Activated CD4-positive, alpha-beta T cell treated with anti-CD3 and anti-CD28 coated beads, Interleukin-2, amount 10 ng/mL, durations not matched to agents 24 days and 14 days (primary cell): ENCODE measurements at regions of chr5 and their contacts with region 1.

Region 1: DNA sequence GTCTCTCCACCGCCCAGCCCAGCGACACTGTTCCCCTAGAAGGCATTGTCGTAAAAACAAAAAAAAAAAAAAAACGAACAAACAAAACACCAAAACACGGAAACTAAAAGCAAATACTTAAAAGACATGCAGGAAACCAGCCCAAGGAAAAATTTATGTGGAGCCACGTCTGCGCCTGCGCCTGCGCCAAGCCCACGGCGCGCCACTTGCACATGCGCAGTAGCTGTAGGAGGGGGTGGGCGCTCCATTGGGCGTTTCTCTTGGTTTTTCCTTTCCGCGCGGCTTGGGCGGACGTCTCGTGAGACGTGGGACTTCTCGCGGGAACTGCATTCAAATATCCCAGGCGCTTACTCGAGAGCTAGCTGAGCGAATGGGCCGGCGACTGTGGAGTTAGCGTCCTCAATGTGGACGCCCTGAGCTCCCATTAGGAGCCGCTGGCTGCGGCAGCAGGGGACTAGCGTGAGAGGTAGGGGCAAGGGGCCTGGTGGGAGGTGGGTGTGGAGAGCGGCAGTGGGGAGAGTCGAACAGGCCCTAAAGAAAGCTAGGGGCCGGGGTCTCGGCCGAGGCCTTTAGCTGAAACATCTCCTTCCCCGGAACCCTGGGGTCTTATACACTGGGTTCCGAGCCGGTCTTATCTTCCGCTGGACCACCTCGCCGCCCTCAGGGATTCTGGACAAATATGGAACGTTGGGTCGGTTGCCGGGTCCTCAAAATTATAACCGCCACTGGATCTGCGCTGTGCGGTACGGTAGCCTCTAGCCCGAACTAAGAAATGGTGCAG is at the start of gene SPDL1:
- DNase-seq: peak; percentile 98
- H3K4me3 Mint-ChIP-seq: peak within 1 kb of the TSS; percentile 99
- H3K27ac Mint-ChIP-seq: peak within 1 kb of the TSS; percentile 97
- H3K4me1 Mint-ChIP-seq: peaks cover 41% of the 10 kb centered on the region
- H3K27me3 Mint-ChIP-seq: peaks cover 13% of the 10 kb centered on the region
- total RNA-seq, gene SPDL1: 36.9 and 38.5 TPM in 2 replicates

Region 2: GRCh38 chr5:168579488-168580226 is 1004.0 kb before region 1 on chr5:
- intact Hi-C with region 1: loop called (anchors 1 kb)
- DNase-seq: peak; percentile 99
- H3K4me3 Mint-ChIP-seq: peak overlapping the region; percentile 95
- H3K27ac Mint-ChIP-seq: peak overlapping the region; percentile 100
- H3K4me1 Mint-ChIP-seq: peaks cover 30% of the 10 kb centered on the region
- H3K27me3 Mint-ChIP-seq: no peaks in the 10 kb centered on the region

Region 3: DNA sequence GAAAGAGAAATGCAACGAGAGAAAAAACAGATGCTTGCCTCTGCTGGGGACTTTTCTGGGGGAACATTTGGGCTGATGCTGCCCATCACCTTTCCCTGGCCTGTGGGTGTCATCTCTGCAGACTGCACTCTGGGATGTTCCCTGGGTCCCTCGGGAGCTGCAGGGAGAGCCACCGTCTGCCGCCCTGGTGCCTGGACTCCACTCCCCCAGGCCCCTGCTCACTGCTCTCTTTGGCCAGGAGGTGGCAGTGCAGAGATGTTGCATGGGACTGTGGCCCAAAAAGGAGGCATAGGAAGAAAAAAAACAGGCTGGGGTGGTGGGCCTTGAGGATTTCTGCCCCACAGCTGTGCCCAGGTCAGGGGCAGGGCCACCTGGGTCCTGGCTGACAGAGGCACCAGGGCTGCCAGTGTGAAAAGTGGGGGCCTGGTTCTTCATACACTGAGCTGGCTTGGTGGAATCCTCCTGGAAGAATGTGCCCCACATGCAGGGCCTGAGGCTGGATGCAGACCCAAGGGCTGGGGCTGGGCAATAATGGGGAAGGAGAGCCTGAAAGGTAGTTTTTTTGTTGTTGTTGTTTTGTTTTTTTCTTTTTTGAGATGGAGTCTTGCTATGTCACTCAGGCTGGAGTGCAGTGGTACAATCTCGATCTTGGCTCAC is 636.3 kb before region 1 on chr5:
- intact Hi-C with region 1: loop called (anchors 1 kb)
- DNase-seq: peak; percentile 72
- H3K4me3 Mint-ChIP-seq: no peak overlapping the region
- H3K27ac Mint-ChIP-seq: no peak overlapping the region
- H3K4me1 Mint-ChIP-seq: peaks cover 5% of the 10 kb centered on the region
- H3K27me3 Mint-ChIP-seq: no peaks in the 10 kb centered on the region

Region 4: GRCh38 chr5:169637085-169637548 is 53.5 kb after region 1 on chr5 and contains the start of gene DOCK2:
- intact Hi-C with region 1: loop called (anchors 1 kb)
- DNase-seq: peak; percentile 92
- H3K4me3 Mint-ChIP-seq: peak within 1 kb of the TSS; percentile 91
- H3K27ac Mint-ChIP-seq: peak within 1 kb of the TSS; percentile 95
- H3K4me1 Mint-ChIP-seq: peaks cover 41% of the 10 kb centered on the region
- H3K27me3 Mint-ChIP-seq: peaks cover 9% of the 10 kb centered on the region
- total RNA-seq, gene DOCK2: 206 and 215 TPM in 2 replicates

Region 5: DNA sequence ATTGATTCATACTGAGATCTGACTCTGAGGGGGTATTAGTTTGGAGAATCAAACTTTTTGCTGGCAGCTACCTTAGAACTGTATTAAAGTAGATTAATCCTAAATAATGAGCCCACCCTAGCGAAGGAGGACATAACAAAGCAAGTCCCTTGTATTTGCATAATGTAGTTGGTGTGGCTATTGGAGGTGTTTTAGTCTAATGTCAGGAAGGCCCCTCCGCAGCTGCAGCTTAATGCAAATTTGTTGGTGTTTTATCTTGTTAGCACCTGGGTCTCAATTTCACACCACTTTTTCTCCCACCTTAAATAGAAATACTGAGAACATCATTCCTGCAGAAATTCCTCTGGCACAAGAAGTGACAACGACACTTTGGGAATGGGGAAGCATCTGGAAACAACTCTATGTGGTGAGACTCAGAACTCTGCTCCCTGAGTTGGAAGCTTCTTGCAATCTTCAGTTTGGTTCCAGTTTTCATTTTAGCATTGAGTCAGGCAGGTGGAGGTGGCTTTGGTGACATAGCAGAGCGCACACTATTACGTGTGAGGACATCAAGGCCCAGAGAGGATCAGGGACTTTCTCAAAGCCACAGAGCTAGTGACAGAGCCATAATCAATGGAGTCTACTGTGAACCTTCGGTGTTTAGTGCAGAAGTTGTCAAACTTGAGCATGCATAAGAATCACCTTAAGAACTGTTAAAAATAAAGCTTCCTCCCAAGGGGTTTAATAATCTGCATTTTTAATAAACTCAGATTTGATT is 87.3 kb after region 1 on chr5:
- intact Hi-C with region 1: loop called (anchors 1 kb)
- DNase-seq: peak; percentile 79
- H3K4me3 Mint-ChIP-seq: peak overlapping the region; percentile 33
- H3K27ac Mint-ChIP-seq: peak overlapping the region; percentile 61
- H3K4me1 Mint-ChIP-seq: peaks cover 27% of the 10 kb centered on the region
- H3K27me3 Mint-ChIP-seq: no peaks in the 10 kb centered on the region